Mammary epithelial cell (primary cell): ENCODE measurements at regions of chr3 and their contacts with region 1.

Region 1: DNA sequence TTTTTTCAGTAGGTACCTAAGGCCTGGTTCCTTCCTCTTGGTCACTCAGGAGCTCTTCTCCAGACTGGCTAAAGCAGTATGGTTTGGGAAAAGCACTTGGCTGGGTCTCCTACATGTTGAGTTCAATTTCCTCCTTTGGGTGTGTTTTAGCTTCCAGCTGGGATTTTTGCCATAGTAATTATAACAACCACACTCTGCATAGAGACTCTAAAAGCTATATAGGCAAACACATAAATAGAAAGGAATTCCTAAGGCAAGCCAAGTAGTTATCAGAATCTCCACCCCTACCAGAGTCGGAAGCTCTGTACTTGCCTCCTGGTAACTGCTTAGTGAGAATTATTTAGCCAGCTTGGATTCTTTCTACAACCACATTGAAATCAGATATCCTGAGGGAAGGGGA is 48.6 kb downstream of the FOXL2 start:
- DNase-seq: no peak
- H3K4me3 ChIP-seq: no peak overlapping the region
- H3K27ac ChIP-seq: no peak overlapping the region
- H3K4me1 ChIP-seq: no peaks in the 10 kb centered on the region
- H3K27me3 ChIP-seq: no peaks in the 10 kb centered on the region
- CTCF ChIP-seq: no peak

Region 2: GRCh38 chr3:138717348-138717747 is 181.0 kb before region 1 on chr3:
- CTCF ChIA-PET with region 1: no interaction called
- dilution Hi-C with region 1: loop called (anchors 5 kb)
- in situ Hi-C with region 1: no loop called
- intact Hi-C with region 1: no loop called
- DNase-seq: no peak
- H3K4me3 ChIP-seq: no peak overlapping the region
- H3K27ac ChIP-seq: no peak overlapping the region
- H3K4me1 ChIP-seq: no peaks in the 10 kb centered on the region
- H3K27me3 ChIP-seq: no peaks in the 10 kb centered on the region
- CTCF ChIP-seq: no peak